ENCODE measurements at regions of chr17 and their contacts with region 1.

Region 1: DNA sequence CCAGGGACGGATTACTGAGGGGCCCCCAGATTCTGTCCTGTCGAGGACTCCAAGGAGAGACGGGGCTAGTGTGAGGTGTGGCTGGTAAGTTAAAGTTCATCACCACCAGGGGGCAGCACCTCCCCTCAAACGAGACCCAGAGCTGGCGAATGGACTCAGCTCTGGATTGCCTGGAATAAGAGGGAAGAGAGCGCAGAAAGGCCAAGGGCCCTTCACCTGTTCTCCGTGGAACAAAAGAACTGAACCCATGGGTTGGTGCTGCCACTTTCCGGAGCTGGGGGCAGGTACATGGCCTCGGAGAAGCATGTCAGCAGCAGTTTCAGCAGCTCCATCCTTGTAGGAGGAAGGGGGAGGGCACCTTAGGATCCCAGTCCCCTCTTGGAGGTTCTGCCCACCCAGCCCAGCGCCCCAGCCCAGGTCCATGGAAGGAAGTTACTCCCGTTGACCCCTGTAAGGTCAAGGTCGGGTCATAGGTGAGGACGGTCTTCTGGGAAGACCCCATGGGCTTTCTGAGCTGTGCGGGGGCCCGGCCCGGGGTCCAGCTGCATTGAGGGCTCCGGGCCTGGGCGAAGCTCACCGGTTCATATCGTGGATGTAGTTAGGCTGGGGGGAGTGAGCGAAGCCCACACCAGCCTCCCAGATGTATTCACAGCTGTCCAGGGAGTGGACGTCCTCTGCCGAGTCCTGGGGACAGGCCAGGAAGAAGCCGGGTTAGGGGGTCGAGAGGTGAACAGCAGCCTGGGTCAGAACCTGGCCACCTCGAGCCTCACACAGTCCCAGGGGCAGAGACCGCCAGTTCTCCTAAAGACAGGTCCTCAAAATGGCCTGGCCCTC is 10.7 kb downstream of the HID1 start:
- DNase-seq: peak; percentile 89
- H3K4me3 Mint-ChIP-seq: no peak overlapping the region
- H3K27ac Mint-ChIP-seq: no peak overlapping the region
- H3K4me1 Mint-ChIP-seq: peaks cover 21% of the 10 kb centered on the region
- H3K27me3 Mint-ChIP-seq: no peaks in the 10 kb centered on the region
- CTCF ChIP-seq: peak; percentile 67

Region 2: DNA sequence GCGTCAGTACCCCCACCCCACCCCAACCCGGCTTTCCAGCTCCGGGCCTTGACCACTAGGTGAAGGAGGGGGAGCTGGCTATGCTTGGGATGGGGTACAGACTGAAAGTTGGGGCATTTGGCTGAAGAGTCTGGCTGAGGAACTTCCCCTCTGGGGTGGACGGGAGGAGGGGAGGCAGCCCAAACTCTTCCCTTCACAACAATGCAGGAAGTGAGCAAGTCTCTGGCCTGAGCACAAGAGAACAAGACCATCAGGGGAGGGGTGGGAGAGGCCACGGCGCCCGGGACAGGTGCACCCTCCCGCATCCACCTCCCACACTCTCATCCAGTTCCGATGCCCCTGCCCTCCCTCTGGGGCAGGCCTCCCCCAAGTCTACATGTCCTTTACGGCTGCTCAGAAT is 44.4 kb before region 1 on chr17:
- CTCF ChIA-PET with region 1: interaction called, 233 read pairs
- POLR2A ChIA-PET with region 1: interaction called, 6 read pairs
- intact Hi-C with region 1: no loop called
- DNase-seq: no peak
- H3K4me3 Mint-ChIP-seq: no peak overlapping the region
- H3K27ac Mint-ChIP-seq: no peak overlapping the region
- H3K4me1 Mint-ChIP-seq: no peaks in the 10 kb centered on the region
- H3K27me3 Mint-ChIP-seq: peaks cover 8% of the 10 kb centered on the region
- CTCF ChIP-seq: no peak

Region 3: GRCh38 chr17:74972107-74972972 is 10.5 kb after region 1 on chr17 and contains the start of gene HID1:
- CTCF ChIA-PET with region 1: interaction called, 25 read pairs
- POLR2A ChIA-PET with region 1: interaction called, 9 read pairs
- intact Hi-C with region 1: no loop called
- DNase-seq: no peak
- H3K4me3 Mint-ChIP-seq: peak within 1 kb of the TSS; percentile 75
- H3K27ac Mint-ChIP-seq: no peak within 1 kb of the TSS
- H3K4me1 Mint-ChIP-seq: peaks cover 6% of the 10 kb centered on the region
- H3K27me3 Mint-ChIP-seq: peaks cover 14% of the 10 kb centered on the region
- CTCF ChIP-seq: no peak
- total RNA-seq, gene HID1: 3.2 and 7.0 TPM in 2 replicates

Region 4: DNA sequence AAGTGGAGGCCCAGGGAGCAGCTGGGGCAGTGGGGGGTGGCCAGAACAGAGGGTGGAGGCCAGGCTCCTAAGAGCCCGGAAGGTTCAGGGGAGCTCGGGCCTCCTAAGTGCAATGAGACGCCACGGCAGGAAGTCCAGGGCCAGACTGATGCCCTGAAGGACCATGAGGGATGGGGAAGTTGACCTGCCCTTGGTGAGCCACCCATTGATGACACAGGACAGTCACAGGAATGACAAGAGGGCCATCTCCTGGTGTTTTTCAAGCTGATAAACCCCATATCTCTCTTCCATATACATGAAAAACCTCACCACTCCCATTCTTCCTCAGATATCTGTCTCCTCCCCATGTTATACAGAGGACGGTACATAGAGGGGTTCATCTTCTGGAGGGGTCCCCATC is 44.8 kb after region 1 on chr17:
- CTCF ChIA-PET with region 1: interaction called, 67 read pairs
- POLR2A ChIA-PET with region 1: interaction called, 20 read pairs
- intact Hi-C with region 1: loop called (anchors 1 kb)
- DNase-seq: peak; percentile 27
- H3K4me3 Mint-ChIP-seq: no peak overlapping the region
- H3K27ac Mint-ChIP-seq: no peak overlapping the region
- H3K4me1 Mint-ChIP-seq: no peaks in the 10 kb centered on the region
- H3K27me3 Mint-ChIP-seq: no peaks in the 10 kb centered on the region
- CTCF ChIP-seq: no peak

Region 5: GRCh38 chr17:75046582-75047289 is 84.9 kb after region 1 on chr17 and contains the starts of genes ATP5PD and KCTD2:
- CTCF ChIA-PET with region 1: interaction called, 19 read pairs
- POLR2A ChIA-PET with region 1: interaction called, 15 read pairs
- intact Hi-C with region 1: loop called (anchors 2 kb)
- DNase-seq: peak; percentile 96
- H3K4me3 Mint-ChIP-seq: peak within 1 kb of the TSS; percentile 98
- H3K27ac Mint-ChIP-seq: peak within 1 kb of the TSS; percentile 95
- H3K4me1 Mint-ChIP-seq: peaks cover 13% of the 10 kb centered on the region
- H3K27me3 Mint-ChIP-seq: no peaks in the 10 kb centered on the region
- CTCF ChIP-seq: no peak
- total RNA-seq, gene ATP5PD: 362 and 455 TPM in 2 replicates
- total RNA-seq, gene KCTD2: 11.9 and 12.8 TPM in 2 replicates

Measured in MCF 10A (cell line).